Activated naive CD4-positive, alpha-beta T cell treated with anti-CD3 and anti-CD28 coated beads, Interleukin-2, amount 10 ng/mL, durations not matched to agents 7 days and 5 days (primary cell): ENCODE measurements at regions of chr4 and their contacts with region 1.

Region 1: GRCh38 chr4:6974138-6974848 is 64.7 kb downstream of the TBC1D14 start:
- DNase-seq: peak; percentile 90
- H3K4me3 Mint-ChIP-seq: no peak overlapping the region
- H3K27ac Mint-ChIP-seq: peak overlapping the region; percentile 49
- H3K4me1 Mint-ChIP-seq: peaks cover 13% of the 10 kb centered on the region
- H3K27me3 Mint-ChIP-seq: no peaks in the 10 kb centered on the region

Region 2: DNA sequence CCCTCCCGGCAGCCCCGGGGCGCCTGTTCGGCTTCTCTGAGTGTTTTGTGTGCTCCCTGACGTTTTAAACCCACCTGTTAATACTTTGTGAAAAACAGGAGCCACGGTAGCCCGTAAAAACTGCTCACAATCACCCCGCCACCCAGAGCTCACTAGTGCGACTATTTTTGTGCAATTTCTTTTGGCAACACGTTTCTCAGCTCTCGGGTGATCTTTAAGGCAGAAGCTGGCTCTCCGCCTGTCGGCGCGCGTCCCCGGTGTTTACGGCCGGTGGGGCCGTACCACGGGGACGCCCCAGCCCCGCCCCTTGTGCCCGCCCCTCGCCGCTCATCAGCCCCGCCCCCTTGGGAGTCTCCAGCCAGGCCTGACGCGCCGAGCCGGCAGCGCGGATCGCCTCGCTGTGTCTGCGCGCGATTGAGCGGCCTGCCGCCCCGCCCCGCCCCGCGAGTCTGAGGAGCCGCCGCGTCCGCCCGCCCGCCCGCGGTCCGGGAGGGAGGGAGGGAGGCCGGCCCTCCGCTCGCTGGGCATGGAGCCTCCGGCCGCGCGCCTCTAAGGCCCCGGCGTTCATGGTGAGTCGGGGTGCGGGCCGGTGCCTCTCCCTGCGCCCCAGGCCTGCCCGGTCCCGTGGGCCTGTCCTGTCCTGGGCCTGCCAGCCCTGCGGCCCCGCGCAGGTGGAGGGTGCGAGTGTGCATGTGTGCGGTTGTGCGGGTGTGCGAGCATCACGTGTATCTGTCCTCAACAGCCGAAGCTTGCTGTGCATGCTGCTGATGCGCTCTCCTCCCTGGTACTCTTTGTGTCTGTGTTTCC is 12.7 kb after region 1 on chr4:
- CTCF ChIA-PET with region 1: interaction called, 20 read pairs
- DNase-seq: peak; percentile 94
- H3K4me3 Mint-ChIP-seq: peak overlapping the region; percentile 96
- H3K27ac Mint-ChIP-seq: peak overlapping the region; percentile 98
- H3K4me1 Mint-ChIP-seq: peaks cover 77% of the 10 kb centered on the region
- H3K27me3 Mint-ChIP-seq: no peaks in the 10 kb centered on the region

Region 3: DNA sequence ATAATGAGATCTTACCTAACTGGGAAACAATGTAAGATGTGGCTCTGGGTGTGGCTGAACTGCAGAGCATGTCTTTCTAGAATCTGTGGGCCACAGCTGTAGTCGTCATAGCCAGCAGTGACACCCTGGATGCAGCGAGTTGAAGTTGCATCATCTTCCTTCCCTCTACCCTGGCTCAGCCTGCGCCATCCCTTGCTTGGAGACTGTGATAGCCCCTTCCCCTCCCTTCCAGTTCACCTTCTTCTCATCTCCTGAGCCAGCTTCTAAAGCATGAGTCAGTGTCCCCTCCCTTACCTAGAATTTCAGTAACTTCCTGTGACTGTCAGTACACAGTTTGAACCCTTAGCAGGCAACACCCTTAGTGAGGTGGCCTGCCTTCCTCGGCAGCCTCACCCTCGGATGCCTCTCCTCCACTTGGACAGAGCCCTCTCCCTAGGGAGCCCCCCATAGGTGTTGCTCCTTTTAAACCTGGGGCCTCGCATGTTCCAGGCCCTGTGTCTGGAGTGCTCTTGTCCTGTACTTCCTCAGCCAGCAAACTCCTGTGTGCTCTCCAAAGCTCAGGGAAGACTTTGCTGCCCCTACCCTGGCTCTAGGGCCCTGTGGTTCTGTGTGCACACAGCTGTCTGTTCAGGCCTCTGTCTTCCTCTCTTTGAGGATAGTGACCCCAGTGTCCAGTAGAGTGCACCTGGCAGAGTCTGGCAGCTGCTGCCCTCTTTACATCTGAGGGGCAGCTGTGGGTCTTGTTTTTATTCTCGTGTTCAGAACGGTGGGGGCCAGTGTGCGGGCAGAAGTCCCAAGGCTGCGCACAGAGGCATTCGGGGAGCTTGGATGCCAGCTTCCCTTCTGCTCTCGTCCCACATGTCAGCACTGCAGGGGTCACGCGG is 25.1 kb after region 1 on chr4:
- CTCF ChIA-PET with region 1: interaction called, 10 read pairs
- DNase-seq: peak; percentile 77
- H3K4me3 Mint-ChIP-seq: peak overlapping the region; percentile 6
- H3K27ac Mint-ChIP-seq: peak overlapping the region; percentile 93
- H3K4me1 Mint-ChIP-seq: peaks cover 42% of the 10 kb centered on the region
- H3K27me3 Mint-ChIP-seq: no peaks in the 10 kb centered on the region

Region 4: DNA sequence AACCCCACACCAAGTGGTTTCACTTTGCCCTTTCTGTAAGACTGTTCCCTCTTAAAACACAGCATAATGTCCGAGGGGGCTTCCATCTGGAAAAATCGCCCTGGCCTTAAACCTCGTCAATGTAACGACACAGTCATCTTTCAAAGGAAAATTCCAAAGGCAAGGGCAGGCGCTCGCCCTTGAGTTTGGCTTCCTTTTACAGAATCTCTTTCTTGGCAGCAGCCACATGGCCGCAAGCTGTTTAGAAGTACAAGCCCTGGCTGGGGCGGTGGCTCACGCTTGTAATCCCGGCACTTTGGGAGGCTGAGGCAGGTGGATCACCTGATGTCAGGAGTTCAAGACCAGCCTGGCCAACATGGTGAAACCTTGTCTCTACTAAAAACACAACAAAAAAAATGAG is 120.6 kb after region 1 on chr4:
- CTCF ChIA-PET with region 1: no interaction called
- DNase-seq: no peak
- H3K4me3 Mint-ChIP-seq: no peak overlapping the region
- H3K27ac Mint-ChIP-seq: no peak overlapping the region
- H3K4me1 Mint-ChIP-seq: no peaks in the 10 kb centered on the region
- H3K27me3 Mint-ChIP-seq: peaks cover 36% of the 10 kb centered on the region

Region 5: DNA sequence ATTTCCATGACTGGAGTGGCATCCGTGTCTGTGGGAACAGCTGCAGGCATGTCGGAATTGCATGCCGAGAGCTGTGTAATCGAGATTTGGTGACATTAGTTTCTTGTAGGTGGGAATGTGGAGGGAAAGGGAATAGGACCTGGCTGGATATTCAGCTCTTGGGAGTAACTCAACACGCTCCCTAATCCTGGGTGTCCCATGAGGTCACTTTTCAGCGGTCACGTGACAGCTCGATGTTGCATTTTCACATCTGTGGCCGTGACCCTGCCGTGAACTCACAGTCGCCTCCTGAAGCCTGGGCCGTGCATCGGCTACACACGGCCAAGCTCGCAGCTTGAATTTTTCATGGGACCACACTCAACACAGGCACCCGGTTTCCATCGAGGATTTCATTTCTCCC is 486.3 kb after region 1 on chr4:
- CTCF ChIA-PET with region 1: no interaction called
- DNase-seq: no peak
- H3K4me3 Mint-ChIP-seq: no peak overlapping the region
- H3K27ac Mint-ChIP-seq: no peak overlapping the region
- H3K4me1 Mint-ChIP-seq: no peaks in the 10 kb centered on the region
- H3K27me3 Mint-ChIP-seq: peaks cover 4% of the 10 kb centered on the region